Caco-2 (cell line): ENCODE measurements at regions of chr14 and their contacts with region 1.

Region 1: GRCh38 chr14:51283402-51284085 is 43.5 kb downstream of the TMX1 start:
- DNase-seq: peak in 1 of 2 experiments; percentile 73
- H3K4me3 ChIP-seq: no peak overlapping the region
- H3K4me3 Mint-ChIP-seq: no peak overlapping the region
- H3K27ac Mint-ChIP-seq: no peak overlapping the region
- H3K4me1 ChIP-seq: no peaks in the 10 kb centered on the region
- H3K4me1 Mint-ChIP-seq: no peaks in the 10 kb centered on the region
- H3K27me3 ChIP-seq: no peaks in the 10 kb centered on the region
- H3K27me3 Mint-ChIP-seq: no peaks in the 10 kb centered on the region
- CTCF ChIP-seq: peak; percentile 69 to 82

Region 2: DNA sequence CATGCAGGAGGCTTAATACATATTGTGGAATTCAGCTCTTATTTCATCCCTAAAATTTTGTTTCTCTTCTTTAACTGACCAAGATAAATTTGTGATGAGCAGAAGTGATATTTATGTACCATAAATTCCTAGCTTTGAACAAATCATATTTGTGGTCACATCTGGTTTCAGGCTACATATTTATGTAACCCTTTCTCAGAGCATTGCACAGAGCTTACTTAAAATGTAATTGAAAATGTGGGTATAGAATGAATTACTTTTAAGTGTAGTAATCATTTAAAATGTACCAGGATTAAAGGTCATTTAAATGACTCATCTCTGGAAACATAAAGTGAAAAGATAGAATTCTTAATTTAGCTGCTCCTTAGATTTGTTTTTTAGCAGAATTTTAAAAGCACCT is 238.2 kb after region 1 on chr14:
- CTCF ChIA-PET with region 1: no interaction called
- POLR2A ChIA-PET with region 1: no interaction called
- intact Hi-C with region 1: loop called (anchors 10 kb)
- DNase-seq: no peak
- H3K4me3 ChIP-seq: no peak overlapping the region
- H3K4me3 Mint-ChIP-seq: no peak overlapping the region
- H3K27ac Mint-ChIP-seq: no peak overlapping the region
- H3K4me1 ChIP-seq: no peaks in the 10 kb centered on the region
- H3K4me1 Mint-ChIP-seq: peaks cover 5% of the 10 kb centered on the region
- H3K27me3 ChIP-seq: no peaks in the 10 kb centered on the region
- H3K27me3 Mint-ChIP-seq: no peaks in the 10 kb centered on the region
- CTCF ChIP-seq: no peak

Region 3: GRCh38 chr14:51554953-51555352 is 271.4 kb after region 1 on chr14:
- CTCF ChIA-PET with region 1: interaction called, 3 read pairs
- POLR2A ChIA-PET with region 1: no interaction called
- intact Hi-C with region 1: loop called (anchors 10 kb)
- DNase-seq: peak in 1 of 2 experiments; percentile 28
- H3K4me3 ChIP-seq: no peak overlapping the region
- H3K4me3 Mint-ChIP-seq: no peak overlapping the region
- H3K27ac Mint-ChIP-seq: peak overlapping the region; percentile 17
- H3K4me1 ChIP-seq: peaks cover 19% of the 10 kb centered on the region
- H3K4me1 Mint-ChIP-seq: peaks cover 7% of the 10 kb centered on the region
- H3K27me3 ChIP-seq: no peaks in the 10 kb centered on the region
- H3K27me3 Mint-ChIP-seq: no peaks in the 10 kb centered on the region
- CTCF ChIP-seq: peak; percentile 19 to 48

Region 4: GRCh38 chr14:51715250-51715649 is 431.7 kb after region 1 on chr14:
- CTCF ChIA-PET with region 1: interaction called, 8 read pairs
- POLR2A ChIA-PET with region 1: no interaction called
- intact Hi-C with region 1: loop called (anchors 1 kb)
- DNase-seq: peak in 1 of 2 experiments; percentile 6
- H3K4me3 ChIP-seq: no peak overlapping the region
- H3K4me3 Mint-ChIP-seq: no peak overlapping the region
- H3K27ac Mint-ChIP-seq: no peak overlapping the region
- H3K4me1 ChIP-seq: peaks cover 20% of the 10 kb centered on the region
- H3K4me1 Mint-ChIP-seq: peaks cover 23% of the 10 kb centered on the region
- H3K27me3 ChIP-seq: no peaks in the 10 kb centered on the region
- H3K27me3 Mint-ChIP-seq: no peaks in the 10 kb centered on the region
- CTCF ChIP-seq: no peak

Region 5: DNA sequence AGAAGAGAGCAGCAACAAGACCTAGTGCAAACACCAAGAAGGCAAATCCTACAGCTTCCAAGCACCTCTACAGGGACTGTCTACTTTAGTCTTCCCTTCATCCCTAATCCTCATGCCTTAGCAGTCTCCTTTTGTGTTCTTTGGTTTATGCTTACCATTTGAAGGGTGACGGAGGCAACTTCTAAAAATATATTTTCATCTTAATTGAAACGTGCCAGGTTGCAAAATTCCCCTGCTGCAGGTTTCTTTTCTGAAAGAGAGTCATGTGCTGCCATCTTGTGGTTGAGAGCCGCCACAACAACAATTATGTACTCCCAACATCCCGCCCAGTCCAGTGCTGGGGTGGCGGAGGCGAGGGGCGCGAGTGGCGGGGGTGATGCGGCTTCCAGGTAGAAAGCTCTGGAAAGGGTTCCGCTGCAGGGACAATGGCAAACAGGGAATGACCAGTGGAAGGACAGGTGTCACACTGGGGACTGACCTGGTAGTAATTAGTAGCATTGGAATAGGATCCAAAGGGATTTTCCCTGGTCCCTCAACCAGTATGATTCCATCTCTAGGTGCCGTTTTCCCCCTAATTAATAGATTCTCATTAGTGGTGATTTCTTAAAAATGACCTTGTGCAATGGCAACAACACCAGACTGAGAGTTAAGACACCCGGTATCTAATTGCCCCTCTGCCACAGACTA is 496.6 kb after region 1 on chr14:
- CTCF ChIA-PET with region 1: interaction called, 24 read pairs
- POLR2A ChIA-PET with region 1: no interaction called
- intact Hi-C with region 1: loop called (anchors 1 kb)
- DNase-seq: peak; percentile 64 to 77
- H3K4me3 ChIP-seq: no peak overlapping the region
- H3K4me3 Mint-ChIP-seq: peak overlapping the region; percentile 38
- H3K27ac Mint-ChIP-seq: no peak overlapping the region
- H3K4me1 ChIP-seq: no peaks in the 10 kb centered on the region
- H3K4me1 Mint-ChIP-seq: peaks cover 8% of the 10 kb centered on the region
- H3K27me3 ChIP-seq: no peaks in the 10 kb centered on the region
- H3K27me3 Mint-ChIP-seq: peaks cover 3% of the 10 kb centered on the region
- CTCF ChIP-seq: peak; percentile 79 to 87

Region 6: GRCh38 chr14:51979088-51979709 is 695.7 kb after region 1 on chr14:
- CTCF ChIA-PET with region 1: no interaction called
- POLR2A ChIA-PET with region 1: no interaction called
- intact Hi-C with region 1: loop called (anchors 1 kb)
- DNase-seq: peak; percentile 73 to 86
- H3K4me3 ChIP-seq: no peak overlapping the region
- H3K4me3 Mint-ChIP-seq: no peak overlapping the region
- H3K27ac Mint-ChIP-seq: no peak overlapping the region
- H3K4me1 ChIP-seq: peaks cover 9% of the 10 kb centered on the region; the same call in 1 of the 2 replicates
- H3K4me1 Mint-ChIP-seq: no peaks in the 10 kb centered on the region
- H3K27me3 ChIP-seq: no peaks in the 10 kb centered on the region
- H3K27me3 Mint-ChIP-seq: no peaks in the 10 kb centered on the region
- CTCF ChIP-seq: peak; percentile 78 to 89